Mammary epithelial cell (primary cell): ENCODE measurements at regions of chrX and their contacts with region 1.

Region 1: DNA sequence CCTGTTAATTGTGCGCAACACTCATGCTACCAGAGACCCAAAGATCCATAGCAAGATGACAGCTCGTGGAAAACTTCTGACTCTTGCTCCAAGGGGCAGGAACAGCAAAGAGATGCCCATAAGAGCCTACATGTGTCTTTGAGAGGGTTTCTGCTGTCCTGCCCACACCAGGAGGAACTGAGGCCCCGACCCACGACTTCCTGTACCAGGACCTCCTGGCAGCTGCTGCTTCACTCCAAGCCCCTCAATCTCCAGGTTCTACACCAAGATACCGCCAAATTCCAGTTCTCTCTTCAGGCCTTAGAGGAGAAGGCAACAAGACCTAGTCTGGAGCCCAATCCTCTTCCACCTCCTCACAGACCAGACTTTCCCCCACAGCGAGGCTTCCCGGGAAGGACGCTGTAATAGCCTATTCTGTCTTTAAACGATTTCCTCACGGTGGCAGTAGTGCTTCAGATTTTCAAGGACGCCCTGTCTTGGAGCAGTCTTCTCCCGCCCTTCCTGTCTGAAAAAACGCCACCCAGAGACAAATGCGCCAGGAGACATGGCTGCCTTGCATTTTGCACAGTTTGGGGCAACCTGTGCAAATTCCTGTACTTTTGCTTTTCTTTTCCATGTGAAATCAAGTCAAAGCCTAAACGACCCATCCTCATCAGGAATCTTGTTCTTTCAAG is 230.2 kb upstream of the STK26 start:
- DNase-seq: peak; percentile 84
- H3K4me3 ChIP-seq: peak overlapping the region; percentile 36 to 50 (median 42)
- H3K27ac ChIP-seq: peak overlapping the region; percentile 63
- H3K4me1 ChIP-seq: peaks cover 12% of the 10 kb centered on the region
- H3K27me3 ChIP-seq: peaks cover 2% of the 10 kb centered on the region
- CTCF ChIP-seq: peak; percentile 20 to 57

Region 2: GRCh38 chrX:131710431-131711045 is 82.4 kb before region 1 on chrX:
- CTCF ChIA-PET with region 1: no interaction called
- dilution Hi-C with region 1: loop called (anchors 10 kb)
- in situ Hi-C with region 1: no loop called
- intact Hi-C with region 1: loop called (anchors 1 kb)
- DNase-seq: no peak
- H3K4me3 ChIP-seq: no peak overlapping the region
- H3K27ac ChIP-seq: no peak overlapping the region
- H3K4me1 ChIP-seq: no peaks in the 10 kb centered on the region
- H3K27me3 ChIP-seq: no peaks in the 10 kb centered on the region
- CTCF ChIP-seq: no peak

Region 3: DNA sequence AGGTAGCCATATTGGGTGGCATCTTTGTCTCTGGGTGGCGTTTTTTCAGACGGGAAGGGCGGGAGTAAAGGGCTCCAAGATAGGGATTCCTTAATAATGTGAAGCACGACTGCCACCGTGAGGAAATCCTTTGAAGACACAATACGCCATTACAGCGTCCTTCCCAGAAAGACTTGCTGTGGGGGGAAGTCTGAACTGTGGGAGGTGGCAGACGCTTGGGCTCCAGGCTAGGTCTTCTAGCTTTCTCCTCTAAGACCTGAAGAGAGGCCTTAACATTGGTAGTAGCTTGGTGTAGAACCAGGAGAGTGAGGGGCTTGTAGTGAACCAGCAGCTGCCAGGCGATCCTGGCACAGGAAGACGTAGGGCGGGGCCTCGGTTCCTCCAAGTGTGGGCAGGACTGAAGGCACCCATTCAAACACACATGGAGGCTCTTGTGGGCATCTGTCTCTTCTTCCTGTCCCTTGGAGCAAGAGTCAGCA is 51.8 kb before region 1 on chrX:
- CTCF ChIA-PET with region 1: no interaction called
- dilution Hi-C with region 1: no loop called
- in situ Hi-C with region 1: no loop called
- intact Hi-C with region 1: loop called (anchors 1 kb)
- DNase-seq: peak; percentile 79
- H3K4me3 ChIP-seq: no peak overlapping the region
- H3K27ac ChIP-seq: no peak overlapping the region
- H3K4me1 ChIP-seq: no peaks in the 10 kb centered on the region
- H3K27me3 ChIP-seq: no peaks in the 10 kb centered on the region
- CTCF ChIP-seq: no peak

Region 4: GRCh38 chrX:131752489-131753198 is 40.3 kb before region 1 on chrX:
- CTCF ChIA-PET with region 1: no interaction called
- dilution Hi-C with region 1: no loop called
- in situ Hi-C with region 1: no loop called
- intact Hi-C with region 1: loop called (anchors 1 kb)
- DNase-seq: peak; percentile 77
- H3K4me3 ChIP-seq: peak overlapping the region; percentile 40 to 54 (median 41)
- H3K27ac ChIP-seq: no peak overlapping the region
- H3K4me1 ChIP-seq: no peaks in the 10 kb centered on the region
- H3K27me3 ChIP-seq: no peaks in the 10 kb centered on the region
- CTCF ChIP-seq: peak; percentile 27 to 43

Region 5: GRCh38 chrX:131778269-131779218 is 14.4 kb before region 1 on chrX:
- CTCF ChIA-PET with region 1: no interaction called
- dilution Hi-C with region 1: no loop called
- in situ Hi-C with region 1: no loop called
- intact Hi-C with region 1: loop called (anchors 2 kb)
- DNase-seq: peak; percentile 70
- H3K4me3 ChIP-seq: peak overlapping the region; percentile 36 to 50 (median 49)
- H3K27ac ChIP-seq: peak overlapping the region; percentile 70
- H3K4me1 ChIP-seq: peaks cover 4% of the 10 kb centered on the region
- H3K27me3 ChIP-seq: no peaks in the 10 kb centered on the region
- CTCF ChIP-seq: peak; percentile 21 to 45

Region 6: DNA sequence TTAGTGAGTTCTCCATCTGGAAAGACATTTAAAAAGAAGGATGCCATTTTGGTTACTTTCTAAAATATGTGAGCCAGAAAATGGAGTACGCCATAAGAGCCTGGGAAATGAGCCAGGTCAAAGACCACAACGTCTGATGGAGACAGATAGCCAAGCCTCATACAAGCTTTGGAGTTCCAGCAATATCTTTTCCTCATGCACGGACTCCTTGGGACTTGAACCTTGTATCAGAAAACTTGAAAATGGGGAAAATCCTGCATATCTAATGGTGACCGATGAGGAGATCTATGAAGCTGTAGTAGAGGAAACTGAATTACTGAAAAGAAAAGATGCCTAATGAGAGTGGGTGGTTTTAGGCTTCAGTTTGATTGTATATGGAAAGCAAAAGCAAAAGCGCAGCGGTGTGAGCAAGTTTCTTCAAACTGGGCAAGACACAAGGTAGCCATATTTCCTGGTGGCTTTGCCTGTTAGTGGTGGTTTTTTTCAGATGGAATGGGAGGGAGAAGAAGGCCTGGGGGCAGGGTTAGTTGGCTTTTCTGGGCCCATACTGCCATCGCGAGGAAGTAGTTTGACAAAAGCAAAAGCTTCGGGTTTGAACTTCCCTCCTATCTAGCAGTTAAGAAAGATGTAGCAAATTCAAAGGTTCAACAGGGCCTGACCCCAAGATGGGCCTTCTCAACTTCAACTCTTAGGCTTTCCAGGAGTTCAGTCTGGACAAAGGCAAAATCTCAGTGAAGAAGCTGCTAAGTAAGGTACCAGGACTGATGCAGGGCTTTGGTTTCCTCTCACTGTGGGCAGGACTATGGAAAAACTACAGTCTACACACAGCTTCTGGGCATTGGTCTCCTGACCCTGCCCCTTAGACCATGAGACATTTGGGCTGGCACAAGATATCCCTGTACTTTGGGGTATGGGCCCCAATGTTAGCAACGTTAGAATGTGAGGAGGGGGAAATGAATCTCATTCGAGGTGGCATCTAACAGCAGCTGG is 20.2 kb after region 1 on chrX:
- CTCF ChIA-PET with region 1: no interaction called
- dilution Hi-C with region 1: no loop called
- in situ Hi-C with region 1: no loop called
- intact Hi-C with region 1: loop called (anchors 1 kb)
- DNase-seq: peak; percentile 79
- H3K4me3 ChIP-seq: peak overlapping the region; percentile 24 to 43 (median 39)
- H3K27ac ChIP-seq: no peak overlapping the region
- H3K4me1 ChIP-seq: no peaks in the 10 kb centered on the region
- H3K27me3 ChIP-seq: no peaks in the 10 kb centered on the region
- CTCF ChIP-seq: peak; percentile 18 to 49